T-cell (primary cell): ENCODE measurements at regions of chrX and their contacts with region 1.

Region 1: DNA sequence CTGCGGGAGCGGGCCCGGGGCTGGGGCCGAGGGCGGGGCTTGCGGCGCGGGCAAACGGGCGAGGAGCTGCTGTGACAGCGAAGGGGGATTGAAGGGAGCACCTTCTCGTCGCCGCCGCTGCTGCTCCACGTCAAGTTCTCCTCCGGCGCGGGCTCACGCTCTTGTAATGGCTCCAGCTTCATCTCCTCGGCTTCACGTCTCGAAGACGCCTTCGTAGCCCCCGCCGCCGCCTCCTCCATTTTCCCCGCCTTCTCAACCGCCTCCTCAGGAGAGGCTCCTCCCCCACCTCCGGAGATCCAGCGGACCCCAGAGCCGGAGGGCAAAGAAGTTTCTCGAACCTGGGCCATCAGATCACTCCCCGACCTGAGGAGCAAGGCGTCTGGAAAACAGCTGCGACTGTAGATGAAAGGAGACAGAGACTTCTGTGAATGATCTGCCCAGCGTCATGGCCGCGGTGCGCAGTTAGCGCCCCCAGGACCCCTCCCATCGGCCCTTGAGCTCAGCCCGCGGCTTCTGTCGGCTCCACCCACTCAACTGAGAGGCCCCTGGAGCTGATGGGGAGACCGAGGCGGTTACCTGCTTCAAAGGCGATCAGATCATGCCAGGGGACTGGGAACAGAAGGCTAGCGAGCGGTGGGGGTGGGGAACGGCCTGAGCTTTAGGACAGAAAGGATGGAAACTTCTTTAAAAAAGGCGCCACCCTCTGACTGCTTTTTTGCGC is 895 bp downstream of the USP51 start:
- DNase-seq: peak; percentile 44 to 77 (median 61)
- ATAC-seq: peak; percentile 76 to 82 (median 79)
- H3K4me3 ChIP-seq: peak overlapping the region; percentile 74
- H3K4me3 Mint-ChIP-seq: peak overlapping the region; percentile 87 to 91 (median 88)
- H3K27ac ChIP-seq: peak overlapping the region; percentile 87
- H3K27ac Mint-ChIP-seq: peak overlapping the region; percentile 95
- H3K4me1 ChIP-seq: peaks cover 0 to 11% of the 10 kb centered on the region in 2 experiments
- H3K4me1 Mint-ChIP-seq: peaks cover 0 to 18% (median 12%) of the 10 kb centered on the region in 3 donors
- H3K27me3 ChIP-seq: no peaks in the 10 kb centered on the region
- H3K27me3 Mint-ChIP-seq: peaks cover 0 to 3% of the 10 kb centered on the region in 2 donors

Region 2: DNA sequence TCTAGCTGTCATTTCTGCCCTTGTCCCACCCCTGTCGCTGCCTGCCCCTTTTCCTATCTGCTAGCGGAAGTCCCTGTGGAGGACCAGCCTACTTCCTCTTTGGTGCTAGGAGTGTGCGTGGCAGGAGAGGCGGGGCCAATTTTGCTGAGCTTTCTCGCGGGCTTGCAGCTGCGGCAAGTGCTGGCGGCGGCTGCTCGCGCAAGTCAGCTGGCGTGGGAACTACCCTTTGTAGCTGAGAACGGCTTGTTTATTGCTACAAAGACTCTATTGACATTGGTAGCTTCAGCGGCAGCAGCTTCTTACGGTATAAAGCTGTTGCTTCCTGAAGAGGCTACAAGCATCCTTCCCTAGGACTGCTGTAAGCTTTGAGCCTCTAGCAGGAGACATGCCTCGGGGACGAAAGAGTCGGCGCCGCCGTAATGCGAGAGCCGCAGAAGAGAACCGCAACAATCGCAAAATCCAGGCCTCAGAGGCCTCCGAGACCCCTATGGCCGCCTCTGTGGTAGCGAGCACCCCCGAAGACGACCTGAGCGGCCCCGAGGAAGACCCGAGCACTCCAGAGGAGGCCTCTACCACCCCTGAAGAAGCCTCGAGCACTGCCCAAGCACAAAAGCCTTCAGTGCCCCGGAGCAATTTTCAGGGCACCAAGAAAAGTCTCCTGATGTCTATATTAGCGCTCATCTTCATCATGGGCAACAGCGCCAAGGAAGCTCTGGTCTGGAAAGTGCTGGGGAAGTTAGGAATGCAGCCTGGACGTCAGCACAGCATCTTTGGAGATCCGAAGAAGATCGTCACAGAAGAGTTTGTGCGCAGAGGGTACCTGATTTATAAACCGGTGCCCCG is 36.5 kb before region 1 on chrX and contains the start of gene MAGEH1:
- CTCF ChIA-PET with region 1: interaction called in 1 of 2 experiments, 9 read pairs
- POLR2A ChIA-PET with region 1: interaction called, 3 to 18 read pairs
- DNase-seq: peak; percentile 47 to 91 (median 81)
- ATAC-seq: peak; percentile 88 to 92 (median 92)
- H3K4me3 ChIP-seq: peak within 1 kb of the TSS; percentile 78 to 88
- H3K4me3 Mint-ChIP-seq: peak within 1 kb of the TSS; percentile 92 to 96 (median 93)
- H3K27ac ChIP-seq: peak within 1 kb of the TSS; percentile 83
- H3K27ac Mint-ChIP-seq: peak within 1 kb of the TSS; percentile 91 to 96
- H3K4me1 ChIP-seq: peaks cover 4 to 7% of the 10 kb centered on the region in 2 experiments
- H3K4me1 Mint-ChIP-seq: peaks cover 13 to 22% (median 21%) of the 10 kb centered on the region in 3 donors
- H3K27me3 ChIP-seq: no peaks in the 10 kb centered on the region
- H3K27me3 Mint-ChIP-seq: no peaks in the 10 kb centered on the region
- total RNA-seq, gene MAGEH1: 18.5 to 25.5 (median 22.3) TPM

Region 3: GRCh38 chrX:55717521-55718497 is 229.1 kb after region 1 on chrX and contains the start of gene RRAGB:
- CTCF ChIA-PET with region 1: interaction called in 1 of 2 experiments, 18 read pairs
- POLR2A ChIA-PET with region 1: interaction called, 3 read pairs
- DNase-seq: peak; percentile 81 to 92 (median 87)
- ATAC-seq: peak; percentile 98
- H3K4me3 ChIP-seq: peak within 1 kb of the TSS; percentile 52 to 78
- H3K4me3 Mint-ChIP-seq: peak within 1 kb of the TSS; percentile 72 to 84 (median 83)
- H3K27ac ChIP-seq: peak within 1 kb of the TSS; percentile 90
- H3K27ac Mint-ChIP-seq: peak within 1 kb of the TSS; percentile 90 to 94
- H3K4me1 ChIP-seq: peaks cover 7 to 14% of the 10 kb centered on the region in 2 experiments
- H3K4me1 Mint-ChIP-seq: peaks cover 25 to 42% (median 39%) of the 10 kb centered on the region in 3 donors
- H3K27me3 ChIP-seq: no peaks in the 10 kb centered on the region
- H3K27me3 Mint-ChIP-seq: peaks cover 0 to 5% of the 10 kb centered on the region in 2 donors
- total RNA-seq, gene RRAGB: 8.4 to 13.8 (median 11.8) TPM

Region 4: DNA sequence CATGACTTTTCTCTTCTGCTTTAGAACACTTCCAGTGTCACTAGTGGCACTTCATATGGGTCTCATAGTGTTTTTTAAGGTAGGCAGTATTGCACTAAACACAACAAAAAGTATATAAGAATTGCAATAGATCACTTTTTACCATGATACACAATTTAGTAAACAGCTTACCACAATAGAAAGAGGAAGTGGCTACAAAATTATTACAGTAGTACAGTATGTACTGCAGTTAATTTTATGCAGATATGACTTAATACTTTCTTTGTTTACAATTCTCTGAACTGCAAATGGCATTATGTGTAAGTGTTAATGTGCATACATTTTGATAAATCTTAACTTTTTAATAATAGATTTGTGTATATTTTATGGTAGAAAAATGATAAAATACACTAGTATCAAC is 386.1 kb after region 1 on chrX:
- CTCF ChIA-PET with region 1: no interaction called
- POLR2A ChIA-PET with region 1: no interaction called
- DNase-seq: no peak
- ATAC-seq: no peak
- H3K4me3 ChIP-seq: no peak overlapping the region
- H3K4me3 Mint-ChIP-seq: no peak overlapping the region
- H3K27ac ChIP-seq: no peak overlapping the region
- H3K27ac Mint-ChIP-seq: no peak overlapping the region
- H3K4me1 ChIP-seq: no peaks in the 10 kb centered on the region
- H3K4me1 Mint-ChIP-seq: no peaks in the 10 kb centered on the region
- H3K27me3 ChIP-seq: peaks cover 0 to 8% of the 10 kb centered on the region in 2 experiments
- H3K27me3 Mint-ChIP-seq: peaks cover 9 to 17% of the 10 kb centered on the region in 2 donors